AG04450 (cell line): ENCODE measurements at regions of chr10 and their contacts with region 1.

Region 1: DNA sequence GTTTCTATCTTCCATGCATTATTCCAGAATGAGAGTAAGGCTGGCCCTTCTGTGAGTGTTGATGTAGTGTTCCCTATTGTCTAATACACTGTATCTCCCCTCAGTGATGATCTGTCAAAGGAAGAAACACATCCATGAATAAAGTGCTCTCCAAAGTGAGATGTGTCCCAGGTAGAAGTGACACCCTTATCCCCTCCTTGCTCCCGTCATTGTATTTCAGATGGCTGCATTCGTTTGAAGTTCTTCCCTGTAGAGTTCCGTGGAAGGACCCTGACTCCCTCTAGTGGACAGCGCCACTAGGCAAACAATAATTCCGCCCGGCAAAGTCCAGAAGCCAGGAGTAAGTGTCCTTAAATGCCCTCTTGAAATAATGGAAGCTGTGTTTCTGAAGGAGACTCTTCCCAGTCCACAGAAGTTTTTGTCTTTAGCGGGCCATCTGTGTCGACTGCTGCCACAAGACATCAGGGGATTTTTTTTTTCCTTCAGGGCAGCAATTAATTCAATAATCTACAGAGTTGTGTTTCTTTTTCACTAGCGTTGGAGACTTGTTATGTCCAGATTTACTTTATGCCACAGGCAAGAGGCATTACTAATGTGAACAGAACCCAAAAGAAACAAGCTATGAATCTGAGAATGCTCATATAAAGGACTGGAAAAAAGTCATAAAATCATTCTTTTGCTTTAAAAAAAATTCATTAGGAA is 64.6 kb downstream of the THNSL1 start:
- DNase-seq: peak; percentile 59
- H3K4me3 ChIP-seq: no peak overlapping the region
- H3K27ac ChIP-seq: no peak overlapping the region
- H3K27me3 ChIP-seq: no peaks in the 10 kb centered on the region
- CTCF ChIP-seq: peak; percentile 98

Region 2: GRCh38 chr10:24579906-24580305 is 501.1 kb before region 1 on chr10:
- CTCF ChIA-PET with region 1: interaction called, 10 read pairs
- POLR2A ChIA-PET with region 1: no interaction called
- DNase-seq: no peak
- H3K4me3 ChIP-seq: no peak overlapping the region
- H3K27ac ChIP-seq: no peak overlapping the region
- H3K27me3 ChIP-seq: no peaks in the 10 kb centered on the region
- CTCF ChIP-seq: no peak

Region 3: DNA sequence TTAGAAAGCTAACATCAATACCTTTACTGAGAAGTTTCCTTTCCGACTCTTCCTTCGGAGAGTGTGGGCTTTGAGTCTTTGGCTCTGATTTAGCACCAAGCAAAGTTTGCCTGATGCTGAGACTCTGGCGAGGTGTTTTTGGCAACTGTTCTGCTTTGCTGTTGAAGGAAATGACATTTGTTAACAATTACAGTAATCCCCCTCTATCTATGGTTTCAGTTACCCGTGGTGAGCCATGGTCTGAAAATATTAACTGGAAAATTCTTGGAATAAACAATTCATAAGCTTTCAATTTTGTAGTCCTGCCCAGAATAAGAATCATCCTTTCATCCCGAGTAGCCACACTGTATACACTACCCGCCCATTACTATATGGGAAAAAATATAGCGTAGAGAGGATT is 483.6 kb before region 1 on chr10:
- CTCF ChIA-PET with region 1: interaction called, 19 read pairs
- POLR2A ChIA-PET with region 1: no interaction called
- DNase-seq: no peak
- H3K4me3 ChIP-seq: no peak overlapping the region
- H3K27ac ChIP-seq: no peak overlapping the region
- H3K27me3 ChIP-seq: no peaks in the 10 kb centered on the region
- CTCF ChIP-seq: no peak

Region 4: DNA sequence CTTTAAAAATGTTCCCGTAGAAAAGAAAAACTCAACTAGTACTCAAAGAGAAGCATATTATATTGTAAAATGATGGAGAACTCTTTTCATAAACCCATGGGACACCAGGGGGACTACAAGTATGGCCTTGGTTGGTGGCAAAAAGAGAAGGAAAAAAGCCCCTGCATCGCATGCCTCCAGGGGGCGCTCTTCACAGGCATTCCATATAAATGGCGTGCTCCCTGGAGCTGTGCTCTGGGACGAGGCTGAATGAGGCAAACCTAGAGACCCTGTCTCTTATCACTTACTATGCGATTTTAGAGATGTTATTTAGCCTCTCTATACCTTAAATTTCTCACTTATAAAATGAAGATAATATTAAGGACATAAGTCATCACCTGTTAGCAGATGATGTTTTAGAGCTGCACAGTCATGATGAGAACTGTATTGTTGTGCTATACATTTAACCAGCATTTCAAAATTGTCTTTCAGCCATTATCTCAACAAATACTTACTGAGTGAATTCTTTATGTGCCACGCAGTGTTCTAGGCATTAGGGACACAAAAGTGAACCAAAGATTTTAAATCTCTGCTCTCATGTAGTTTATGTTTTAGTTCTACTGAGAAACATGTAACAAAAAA is 463.1 kb before region 1 on chr10:
- CTCF ChIA-PET with region 1: interaction called, 67 read pairs
- POLR2A ChIA-PET with region 1: no interaction called
- DNase-seq: no peak
- H3K4me3 ChIP-seq: no peak overlapping the region
- H3K27ac ChIP-seq: no peak overlapping the region
- H3K27me3 ChIP-seq: no peaks in the 10 kb centered on the region
- CTCF ChIP-seq: peak; percentile 84

Region 5: DNA sequence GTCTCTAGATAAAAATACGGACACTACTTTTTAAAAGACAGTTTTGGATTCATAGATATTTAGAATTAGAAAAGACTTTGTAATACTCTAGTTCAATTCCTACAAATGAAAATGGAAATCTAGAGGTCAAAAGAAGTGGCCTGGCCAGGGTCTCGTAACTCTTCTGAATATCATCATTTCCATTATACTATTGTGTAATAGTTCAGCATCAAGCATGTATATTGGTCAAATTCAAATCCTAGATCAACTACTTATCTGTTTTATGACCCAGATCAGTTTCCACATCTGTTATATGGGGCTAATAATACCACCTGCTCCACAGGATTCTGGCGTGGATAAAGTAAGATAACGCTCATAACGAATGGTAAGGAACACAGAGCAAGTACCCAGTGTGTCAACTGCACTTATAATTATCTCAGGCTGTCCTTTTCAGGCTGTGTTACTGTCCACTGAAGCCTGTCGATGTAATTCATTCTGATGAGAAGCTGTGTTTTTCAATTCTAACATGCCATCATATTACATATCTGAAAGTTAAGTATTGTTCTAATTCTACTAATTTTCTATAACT is 411.7 kb before region 1 on chr10:
- CTCF ChIA-PET with region 1: interaction called, 12 read pairs
- POLR2A ChIA-PET with region 1: no interaction called
- DNase-seq: no peak
- H3K4me3 ChIP-seq: no peak overlapping the region
- H3K27ac ChIP-seq: no peak overlapping the region
- H3K27me3 ChIP-seq: no peaks in the 10 kb centered on the region
- CTCF ChIP-seq: no peak

Region 6: GRCh38 chr10:24706479-24707118 is 374.4 kb before region 1 on chr10:
- CTCF ChIA-PET with region 1: interaction called, 14 read pairs
- POLR2A ChIA-PET with region 1: no interaction called
- DNase-seq: peak; percentile 83
- H3K4me3 ChIP-seq: no peak overlapping the region
- H3K27ac ChIP-seq: peak overlapping the region; percentile 41
- H3K27me3 ChIP-seq: no peaks in the 10 kb centered on the region
- CTCF ChIP-seq: no peak

Region 7: GRCh38 chr10:24969841-24970281 is 111.2 kb before region 1 on chr10:
- CTCF ChIA-PET with region 1: no interaction called
- POLR2A ChIA-PET with region 1: no interaction called
- DNase-seq: no peak
- H3K4me3 ChIP-seq: no peak overlapping the region
- H3K27ac ChIP-seq: no peak overlapping the region
- H3K27me3 ChIP-seq: no peaks in the 10 kb centered on the region
- CTCF ChIP-seq: no peak

Region 8: GRCh38 chr10:25046641-25047040 is 34.4 kb before region 1 on chr10:
- CTCF ChIA-PET with region 1: interaction called, 10 read pairs
- POLR2A ChIA-PET with region 1: no interaction called
- DNase-seq: no peak
- H3K4me3 ChIP-seq: no peak overlapping the region
- H3K27ac ChIP-seq: no peak overlapping the region
- H3K27me3 ChIP-seq: peaks cover 4% of the 10 kb centered on the region
- CTCF ChIP-seq: no peak